Activated B cell treated with CpG ODN at 0.5 μM for 24 hours (primary cell): ENCODE measurements at regions of chr1 and their contacts with region 1.

Region 1: DNA sequence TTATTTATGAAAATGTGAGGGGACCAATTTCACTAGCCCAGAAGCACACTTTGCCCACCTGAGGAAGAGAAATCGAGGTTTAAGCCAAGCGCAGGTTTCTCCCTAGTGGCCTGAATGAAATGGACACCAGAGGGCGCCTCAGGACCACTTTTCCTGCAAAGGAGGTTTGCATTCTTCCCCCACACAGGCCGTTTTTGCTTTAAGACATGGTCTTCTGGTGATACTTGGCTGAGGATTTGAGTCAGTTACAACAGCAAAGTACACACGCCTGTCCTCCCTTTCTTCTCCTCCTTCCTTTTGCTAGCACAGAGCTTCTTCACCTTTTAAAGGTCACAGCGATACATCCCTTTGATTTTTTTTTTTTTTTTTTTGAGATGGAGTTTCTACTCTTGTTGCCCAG is 5.4 kb downstream of the PLA2G2E start:
- DNase-seq: peak; percentile 57
- ATAC-seq: peak; percentile 74
- H3K4me3 Mint-ChIP-seq: no peak overlapping the region
- H3K27ac Mint-ChIP-seq: no peak overlapping the region
- H3K4me1 Mint-ChIP-seq: peaks cover 2% of the 10 kb centered on the region
- H3K27me3 Mint-ChIP-seq: peaks cover 5% of the 10 kb centered on the region
- CTCF ChIP-seq: peak; percentile 86

Region 2: GRCh38 chr1:19882111-19883071 is 35.7 kb before region 1 on chr1 and contains the start of gene OTUD3:
- CTCF ChIA-PET with region 1: interaction called, 11 read pairs
- POLR2A ChIA-PET with region 1: no interaction called
- intact Hi-C with region 1: no loop called
- DNase-seq: peak; percentile 90
- ATAC-seq: peak; percentile 96
- H3K4me3 Mint-ChIP-seq: peak within 1 kb of the TSS; percentile 87
- H3K27ac Mint-ChIP-seq: peak within 1 kb of the TSS; percentile 84
- H3K4me1 Mint-ChIP-seq: peaks cover 30% of the 10 kb centered on the region
- H3K27me3 Mint-ChIP-seq: peaks cover 5% of the 10 kb centered on the region
- CTCF ChIP-seq: peak; percentile 64
- total RNA-seq, gene OTUD3: 13.2 and 14.2 TPM in 2 replicates

Region 3: DNA sequence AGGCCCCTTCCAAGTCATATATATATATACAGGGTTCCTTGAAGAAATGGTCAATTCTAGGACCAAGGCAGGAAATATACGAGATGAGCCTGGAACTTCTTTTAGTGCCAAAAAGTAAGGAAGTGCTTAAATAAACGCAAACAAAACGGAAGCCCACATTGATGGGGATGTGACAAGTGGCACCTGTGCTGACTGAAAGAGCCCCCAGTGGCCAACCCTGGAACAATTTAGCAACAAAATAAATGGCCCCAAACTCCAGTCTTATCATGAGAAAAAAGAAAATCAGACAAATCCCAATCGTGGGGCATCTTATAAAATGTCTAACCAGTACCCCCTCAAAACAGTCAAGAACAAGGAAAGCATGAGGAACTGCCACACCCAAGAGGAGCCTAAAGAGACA is 169.6 kb after region 1 on chr1:
- CTCF ChIA-PET with region 1: no interaction called
- POLR2A ChIA-PET with region 1: no interaction called
- intact Hi-C with region 1: loop called (anchors 2 kb)
- DNase-seq: no peak
- ATAC-seq: no peak
- H3K4me3 Mint-ChIP-seq: no peak overlapping the region
- H3K27ac Mint-ChIP-seq: no peak overlapping the region
- H3K4me1 Mint-ChIP-seq: peaks cover 13% of the 10 kb centered on the region
- H3K27me3 Mint-ChIP-seq: no peaks in the 10 kb centered on the region
- CTCF ChIP-seq: no peak

Region 4: DNA sequence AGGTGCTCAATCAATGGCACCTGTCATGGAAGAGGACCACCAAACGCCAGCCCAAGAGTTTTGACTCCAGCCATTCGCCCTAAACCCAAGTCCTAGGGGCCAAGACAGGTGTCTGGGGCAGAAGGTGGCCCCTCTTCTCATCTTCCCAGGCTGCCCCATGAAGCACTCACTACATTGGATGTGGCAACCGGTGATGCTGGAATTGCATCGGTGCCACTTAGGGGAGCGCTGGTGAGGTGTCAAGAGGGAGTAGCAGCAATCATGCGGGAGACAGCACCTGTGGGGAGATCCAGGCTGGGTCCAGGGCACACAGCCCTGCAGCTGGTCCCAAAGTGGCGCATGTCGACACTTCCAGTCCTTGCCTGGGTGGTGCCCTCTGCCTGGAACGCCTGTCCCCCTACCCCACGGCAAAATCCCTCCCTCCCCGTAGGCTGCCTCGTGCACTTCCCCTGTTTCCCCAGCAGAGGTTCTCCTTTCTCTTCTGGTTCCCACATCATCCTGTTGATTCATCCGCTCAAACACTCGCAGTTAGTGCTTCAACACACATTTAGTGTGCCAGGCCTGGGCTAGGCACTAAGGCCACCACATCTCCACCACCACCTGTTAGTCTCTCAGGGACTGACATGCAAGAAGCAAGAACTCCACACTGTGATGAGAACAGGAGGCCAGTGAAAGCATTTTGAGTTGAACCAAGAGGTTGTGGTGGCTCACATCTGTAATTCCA is 182.7 kb after region 1 on chr1:
- CTCF ChIA-PET with region 1: no interaction called
- POLR2A ChIA-PET with region 1: no interaction called
- intact Hi-C with region 1: loop called (anchors 1 kb)
- DNase-seq: peak; percentile 29
- ATAC-seq: peak; percentile 92
- H3K4me3 Mint-ChIP-seq: no peak overlapping the region
- H3K27ac Mint-ChIP-seq: no peak overlapping the region
- H3K4me1 Mint-ChIP-seq: peaks cover 6% of the 10 kb centered on the region
- H3K27me3 Mint-ChIP-seq: no peaks in the 10 kb centered on the region
- CTCF ChIP-seq: no peak

Region 5: DNA sequence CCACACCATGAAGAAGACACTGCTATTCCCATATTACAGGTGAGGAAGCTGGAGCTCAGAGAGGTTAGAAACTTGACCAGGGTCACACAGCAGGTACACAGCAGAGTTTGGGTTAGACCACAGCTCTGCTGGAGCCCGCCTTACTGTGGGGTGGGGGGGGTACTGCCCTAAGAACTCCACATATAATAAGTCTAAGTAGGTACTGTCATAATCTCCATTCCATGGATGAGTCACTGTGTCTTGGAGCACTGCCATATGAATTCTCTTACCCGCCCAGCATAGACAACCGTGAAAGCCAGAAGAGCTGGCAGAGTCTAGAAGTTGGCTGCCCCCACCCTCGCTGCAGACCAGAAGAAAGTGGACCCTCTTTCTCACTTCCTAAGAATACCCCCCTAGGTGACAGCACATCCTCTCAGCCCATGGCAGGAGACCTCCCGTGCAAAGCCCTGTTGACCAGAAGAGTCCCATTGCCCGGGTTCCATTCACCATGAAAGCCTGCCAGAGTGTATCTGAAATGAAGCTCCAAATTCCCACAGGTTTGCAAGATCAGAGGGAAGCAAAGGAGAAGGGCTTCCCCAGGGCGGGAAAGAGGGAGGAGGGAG is 206.5 kb after region 1 on chr1:
- CTCF ChIA-PET with region 1: no interaction called
- POLR2A ChIA-PET with region 1: no interaction called
- intact Hi-C with region 1: no loop called
- DNase-seq: no peak
- ATAC-seq: no peak
- H3K4me3 Mint-ChIP-seq: no peak overlapping the region
- H3K27ac Mint-ChIP-seq: peak overlapping the region; percentile 35
- H3K4me1 Mint-ChIP-seq: peaks cover 64% of the 10 kb centered on the region
- H3K27me3 Mint-ChIP-seq: no peaks in the 10 kb centered on the region
- CTCF ChIP-seq: no peak

Region 6: GRCh38 chr1:20151906-20152598 is 234.0 kb after region 1 on chr1:
- CTCF ChIA-PET with region 1: interaction called, 91 read pairs
- POLR2A ChIA-PET with region 1: interaction called, 3 read pairs
- intact Hi-C with region 1: loop called (anchors 1 kb)
- DNase-seq: peak; percentile 74
- ATAC-seq: peak; percentile 98
- H3K4me3 Mint-ChIP-seq: peak overlapping the region; percentile 80
- H3K27ac Mint-ChIP-seq: no peak overlapping the region
- H3K4me1 Mint-ChIP-seq: peaks cover 9% of the 10 kb centered on the region
- H3K27me3 Mint-ChIP-seq: no peaks in the 10 kb centered on the region
- CTCF ChIP-seq: peak; percentile 65

Region 7: DNA sequence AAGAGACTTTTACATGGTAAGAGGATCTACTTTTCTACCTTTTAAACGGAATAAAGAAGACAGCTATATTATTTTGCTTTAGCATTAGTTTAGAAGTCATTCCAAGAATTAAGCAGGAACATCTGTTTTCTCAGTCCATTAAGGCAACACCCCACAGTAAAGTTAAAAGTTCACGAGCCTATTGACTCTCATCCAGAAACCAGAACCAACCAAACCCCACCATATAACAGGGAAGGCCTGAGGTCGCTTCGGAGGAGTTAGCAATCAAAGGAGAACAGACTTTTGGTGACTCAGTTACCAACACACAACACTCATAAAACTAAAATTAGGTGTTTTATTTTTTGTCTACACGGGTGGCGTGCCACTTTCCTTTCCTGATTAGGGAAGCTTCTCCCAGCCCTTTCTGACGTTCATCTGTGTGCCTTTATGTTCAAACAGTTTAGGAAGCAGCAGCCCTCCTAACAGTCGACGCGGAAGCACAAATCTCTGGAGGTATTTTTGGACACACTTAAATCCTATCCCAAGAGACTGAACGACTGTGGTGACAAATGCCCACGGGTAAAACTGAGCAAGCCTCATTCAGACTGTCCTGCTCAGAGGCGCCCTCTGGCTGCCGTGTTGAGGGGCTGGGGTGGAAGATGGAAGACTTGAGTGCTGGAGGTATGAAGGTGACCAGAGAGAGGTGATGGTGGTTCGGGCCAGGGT is 276.9 kb after region 1 on chr1:
- CTCF ChIA-PET with region 1: interaction called, 23 read pairs
- POLR2A ChIA-PET with region 1: no interaction called
- intact Hi-C with region 1: loop called (anchors 1 kb)
- DNase-seq: peak; percentile 54
- ATAC-seq: peak; percentile 87
- H3K4me3 Mint-ChIP-seq: no peak overlapping the region
- H3K27ac Mint-ChIP-seq: no peak overlapping the region
- H3K4me1 Mint-ChIP-seq: peaks cover 7% of the 10 kb centered on the region
- H3K27me3 Mint-ChIP-seq: peaks cover 34% of the 10 kb centered on the region
- CTCF ChIP-seq: peak; percentile 56

Region 8: DNA sequence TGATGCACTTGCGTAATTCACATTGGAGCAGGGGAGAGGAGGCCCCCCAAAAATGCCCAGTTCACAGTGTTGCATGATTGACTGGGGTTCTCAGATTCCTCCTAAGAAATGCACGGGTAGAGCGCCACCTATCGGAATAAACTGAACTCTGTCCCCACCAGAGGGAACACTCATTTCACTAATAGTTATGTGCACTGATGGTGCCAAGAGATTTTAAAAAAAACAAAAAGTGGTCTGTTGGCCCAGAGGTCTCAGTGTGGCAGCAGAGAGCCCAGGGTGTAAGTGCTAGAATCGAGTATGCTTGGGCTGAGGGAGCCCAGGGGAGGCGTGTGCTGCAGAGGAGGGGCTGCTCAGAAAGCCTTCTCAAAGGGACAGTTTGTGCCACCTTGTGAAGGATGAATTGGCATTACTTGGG is 722.1 kb after region 1 on chr1:
- CTCF ChIA-PET with region 1: no interaction called
- POLR2A ChIA-PET with region 1: no interaction called
- intact Hi-C with region 1: loop called (anchors 1 kb)
- DNase-seq: no peak
- ATAC-seq: peak; percentile 72
- H3K4me3 Mint-ChIP-seq: no peak overlapping the region
- H3K27ac Mint-ChIP-seq: no peak overlapping the region
- H3K4me1 Mint-ChIP-seq: peaks cover 3% of the 10 kb centered on the region
- H3K27me3 Mint-ChIP-seq: no peaks in the 10 kb centered on the region
- CTCF ChIP-seq: peak; percentile 42